PC-9 (cell line): ENCODE measurements at regions of chr1 and their contacts with region 1.

Region 1: GRCh38 chr1:42766741-42767509 is at the starts of genes C1orf50 and P3H1:
- DNase-seq: peak; percentile 96 to 100
- H3K4me3 ChIP-seq: peak within 1 kb of the TSS; percentile 86
- H3K27ac ChIP-seq: no peak within 1 kb of the TSS
- H3K4me1 ChIP-seq: peaks cover 24% of the 10 kb centered on the region
- H3K27me3 ChIP-seq: no peaks in the 10 kb centered on the region
- CTCF ChIP-seq: no peak
- total RNA-seq, gene C1orf50: 5.6 and 8.3 TPM in 2 replicates
- total RNA-seq, gene P3H1: 22.8 and 45.5 TPM in 2 replicates

Region 2: DNA sequence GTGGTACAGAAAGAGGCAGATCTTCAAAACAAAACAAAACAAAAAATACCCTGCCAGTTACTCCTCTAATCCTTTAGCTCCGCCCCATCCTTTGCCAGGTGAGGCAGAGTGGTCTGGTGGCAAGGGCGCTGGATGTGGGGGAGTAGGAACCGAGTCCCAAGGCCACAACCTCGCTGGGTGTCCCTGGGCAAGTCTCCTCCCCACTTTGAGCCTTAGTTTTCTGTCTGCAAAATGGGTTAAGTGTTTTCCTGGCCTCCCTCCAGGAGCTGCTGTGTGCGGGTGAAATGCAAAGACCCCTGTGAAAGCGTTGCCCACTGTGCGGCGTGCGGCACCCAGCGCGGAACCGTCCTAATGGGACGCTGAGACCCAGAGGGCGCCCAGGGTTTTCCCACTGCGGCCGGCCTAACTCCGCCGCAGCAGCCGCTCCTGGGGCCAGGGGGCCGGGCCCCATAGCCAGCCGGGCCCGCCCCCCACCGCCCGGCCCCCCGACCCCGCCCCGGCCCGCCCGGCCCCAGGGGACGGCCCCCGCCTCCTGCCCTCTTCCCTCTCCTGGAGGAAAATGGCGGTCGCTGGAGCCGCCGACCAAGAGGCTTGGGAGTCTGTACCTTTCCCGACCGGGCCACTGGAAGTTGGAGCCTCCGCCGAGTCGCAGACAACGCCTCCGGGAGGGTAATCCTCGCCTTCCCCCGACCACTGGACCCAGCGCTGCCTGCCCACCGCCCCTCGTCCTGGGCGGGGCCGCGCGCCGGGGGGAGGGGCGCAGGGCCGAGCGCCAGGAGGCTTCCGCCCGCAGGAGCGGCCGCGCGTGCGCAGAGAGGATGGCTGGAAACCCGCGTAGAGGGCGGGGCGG is 49.9 kb after region 1 on chr1 and contains the starts of genes ERMAP and SVBP:
- CTCF ChIA-PET with region 1: no interaction called
- POLR2A ChIA-PET with region 1: interaction called, 3 read pairs
- intact Hi-C with region 1: loop called (anchors 2 kb)
- DNase-seq: peak; percentile 66 to 94
- H3K4me3 ChIP-seq: peak within 1 kb of the TSS; percentile 100
- H3K27ac ChIP-seq: peak within 1 kb of the TSS; percentile 97
- H3K4me1 ChIP-seq: peaks cover 21% of the 10 kb centered on the region
- H3K27me3 ChIP-seq: no peaks in the 10 kb centered on the region
- CTCF ChIP-seq: no peak
- total RNA-seq, gene ERMAP: 20.8 and 31.2 TPM in 2 replicates
- total RNA-seq, gene SVBP: 32.3 and 32.6 TPM in 2 replicates

Region 3: GRCh38 chr1:42846257-42847110 is 79.6 kb after region 1 on chr1 and contains the start of gene ZNF691:
- CTCF ChIA-PET with region 1: interaction called, 12 read pairs
- POLR2A ChIA-PET with region 1: interaction called, 3 read pairs
- intact Hi-C with region 1: no loop called
- DNase-seq: peak; percentile 93
- H3K4me3 ChIP-seq: peak within 1 kb of the TSS; percentile 80
- H3K27ac ChIP-seq: no peak within 1 kb of the TSS
- H3K4me1 ChIP-seq: peaks cover 21% of the 10 kb centered on the region
- H3K27me3 ChIP-seq: no peaks in the 10 kb centered on the region
- CTCF ChIP-seq: peak; percentile 43; the same call in 1 of the 2 replicates
- total RNA-seq, gene ZNF691: 11.4 and 14.6 TPM in 2 replicates

Region 4: DNA sequence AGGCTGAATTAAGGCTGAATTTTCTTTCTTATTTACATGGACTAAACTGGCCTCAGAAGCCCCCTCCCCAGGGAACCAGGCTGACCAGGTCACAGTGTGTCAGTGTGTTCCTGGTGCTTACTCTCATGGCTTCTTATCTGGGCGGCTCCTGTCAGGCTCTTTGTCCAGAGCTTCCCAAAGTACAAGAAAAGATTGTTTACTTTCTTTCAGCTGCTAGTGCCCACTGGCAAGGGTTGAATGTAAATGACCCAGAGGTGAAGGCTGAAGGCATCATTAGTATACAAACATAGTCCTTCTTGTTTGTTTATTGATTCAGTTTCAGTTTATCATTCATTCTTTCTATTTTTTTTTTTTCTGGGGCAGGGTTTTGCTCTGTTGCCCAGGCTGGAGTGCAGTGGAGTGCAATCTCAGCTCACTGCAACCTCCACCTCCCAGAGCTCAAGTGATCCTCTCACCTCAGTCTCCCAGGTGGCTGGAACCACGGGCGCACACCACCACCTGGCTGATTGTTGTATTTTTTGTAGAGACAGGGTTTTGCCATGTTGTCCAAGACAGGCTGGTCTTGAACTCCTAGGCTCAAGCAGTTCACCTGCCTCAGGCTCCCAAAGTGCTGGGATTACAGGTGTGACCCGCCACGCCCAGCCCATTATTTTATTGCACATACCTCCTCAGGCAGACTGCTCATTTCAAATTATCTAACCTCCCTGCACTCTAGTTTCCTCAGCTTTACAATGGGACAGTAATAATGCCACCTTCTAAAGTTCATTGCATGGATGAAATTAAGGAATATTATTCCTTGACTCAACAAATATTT is 873.3 kb after region 1 on chr1:
- CTCF ChIA-PET with region 1: no interaction called
- POLR2A ChIA-PET with region 1: interaction called, 14 read pairs
- intact Hi-C with region 1: no loop called
- DNase-seq: no peak
- H3K4me3 ChIP-seq: no peak overlapping the region
- H3K27ac ChIP-seq: no peak overlapping the region
- H3K4me1 ChIP-seq: peaks cover 45% of the 10 kb centered on the region
- H3K27me3 ChIP-seq: no peaks in the 10 kb centered on the region
- CTCF ChIP-seq: no peak